Breast epithelium (tissue), 4 donors: ENCODE measurements at regions of chr1 and their contacts with region 1.

Region 1: DNA sequence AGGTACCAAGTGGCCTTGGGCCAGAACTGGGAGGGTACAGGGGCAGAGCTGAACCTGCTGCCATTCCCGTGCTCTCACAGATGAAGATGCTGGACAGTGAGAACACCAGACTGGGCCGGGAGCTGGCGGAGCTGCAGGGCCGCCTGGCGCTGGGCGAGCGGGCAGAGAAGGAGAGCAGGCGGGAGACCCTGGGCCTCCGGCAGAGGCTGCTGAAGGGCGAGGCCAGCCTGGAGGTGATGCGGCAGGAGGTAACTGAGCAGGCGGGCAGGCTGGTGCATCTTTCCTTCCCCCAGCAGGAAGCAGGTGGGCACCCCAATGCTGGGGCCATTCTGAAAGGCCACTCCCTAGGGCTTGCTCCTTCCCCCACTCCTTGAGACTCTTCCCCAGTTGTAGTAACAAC is 21.9 kb downstream of the MFAP2 start:
- DNase-seq: no peak
- H3K4me3 ChIP-seq: no peak overlapping the region
- H3K27ac ChIP-seq: no peak overlapping the region
- H3K4me1 ChIP-seq: no peaks in the 10 kb centered on the region
- H3K27me3 ChIP-seq: no peaks in the 10 kb centered on the region
- CTCF ChIP-seq: no peak
- POLR2A ChIP-seq: no peak

Region 2: DNA sequence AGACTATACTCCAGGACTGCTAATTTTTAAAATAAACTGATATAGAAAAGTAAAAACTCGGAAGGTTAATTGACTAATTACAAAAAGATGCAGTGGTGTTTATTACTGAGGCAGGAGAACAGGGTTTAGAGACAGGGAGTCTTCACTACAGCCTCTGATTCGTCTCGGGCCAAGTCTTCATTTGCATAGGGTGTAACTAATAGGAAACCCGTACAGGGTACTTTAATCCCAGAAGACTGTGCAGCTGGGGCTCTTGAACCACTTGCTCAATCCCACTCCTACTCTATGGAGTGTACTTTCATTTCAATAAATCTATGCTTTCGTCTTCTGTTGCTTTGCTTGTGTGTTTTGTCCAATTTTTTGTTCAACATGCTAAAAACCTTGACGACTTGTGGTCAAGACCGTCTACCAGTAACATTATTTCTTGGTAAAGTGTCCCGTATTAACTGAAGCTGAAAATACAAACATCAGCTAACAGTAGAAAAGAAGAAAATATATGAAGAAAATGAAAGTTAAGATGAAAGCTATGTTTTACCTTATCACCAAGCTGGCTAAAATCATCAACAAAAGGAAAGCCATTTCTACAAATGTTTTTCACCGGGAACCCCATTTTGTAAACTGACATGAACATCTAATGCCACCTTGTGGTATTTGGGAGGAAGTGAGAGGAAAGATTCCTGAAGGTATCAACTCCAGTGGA is 87.3 kb after region 1 on chr1:
- intact Hi-C with region 1: loop called (anchors 5 kb)
- DNase-seq: no peak
- H3K4me3 ChIP-seq: peak overlapping the region in 2 of 3 donors; percentile 23 to 38
- H3K27ac ChIP-seq: no peak overlapping the region
- H3K4me1 ChIP-seq: no peaks in the 10 kb centered on the region
- H3K27me3 ChIP-seq: no peaks in the 10 kb centered on the region
- CTCF ChIP-seq: peak; percentile 77 to 91 (median 89)
- POLR2A ChIP-seq: no peak